ENCODE measurements at regions of chrX and their contacts with region 1.

Region 1: GRCh38 chrX:129931411-129932015 is 25.5 kb downstream of the UTP14A start:
- DNase-seq: peak; percentile 92 to 96
- H3K4me3 ChIP-seq: peak overlapping the region; percentile 66 to 70
- H3K27ac ChIP-seq: peak overlapping the region; percentile 88 to 93
- H3K4me1 ChIP-seq: no peaks in the 10 kb centered on the region
- H3K27me3 ChIP-seq: no peaks in the 10 kb centered on the region
- CTCF ChIP-seq: no peak

Region 2: DNA sequence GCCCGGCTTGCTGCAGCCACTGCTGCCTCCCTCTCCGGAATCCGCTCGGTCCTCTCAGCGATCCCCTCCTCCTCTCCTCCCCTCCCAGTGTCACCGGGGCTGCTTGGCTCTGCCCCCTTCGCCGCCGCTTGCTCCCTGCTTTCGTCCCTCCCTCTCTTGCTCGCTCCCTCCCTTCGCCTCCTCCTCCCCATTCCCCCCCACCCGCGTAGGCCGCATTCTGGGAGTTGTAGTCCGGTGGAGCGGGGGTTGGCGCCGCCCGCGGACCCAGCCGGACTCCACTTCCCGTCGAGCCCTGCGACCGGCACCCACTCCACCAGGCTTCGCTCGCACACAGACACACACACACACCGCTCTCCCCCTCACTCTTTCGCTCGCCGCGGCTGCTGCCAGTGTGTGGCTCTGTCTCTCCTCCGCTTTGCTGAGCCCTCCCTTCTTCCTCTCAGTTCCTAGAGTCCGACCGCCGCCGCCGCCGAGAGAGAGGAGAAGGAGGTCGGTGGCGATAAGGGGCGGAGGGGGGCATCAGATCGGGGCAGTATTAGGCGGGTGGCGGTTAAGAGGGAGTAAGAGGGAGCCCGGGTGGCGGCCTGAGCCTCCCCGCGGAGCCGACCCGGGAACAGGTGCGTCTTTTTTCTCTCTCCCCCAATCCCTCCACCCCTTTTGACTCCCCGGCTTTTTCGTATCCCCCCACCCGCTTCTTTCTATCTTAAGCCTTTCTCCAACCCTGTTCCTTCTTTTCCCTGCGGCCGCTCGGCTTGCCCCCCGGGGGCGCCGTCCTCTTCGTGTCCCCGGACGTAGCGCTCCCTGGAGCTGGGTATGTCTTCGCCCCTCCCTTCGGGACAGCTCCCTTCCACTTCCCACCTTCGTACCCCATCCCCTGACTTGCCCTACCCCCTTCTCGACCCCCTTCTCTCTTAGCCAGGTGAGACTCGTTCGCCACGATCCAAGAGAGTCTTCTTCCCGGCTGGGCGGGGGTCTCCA is 51.0 kb after region 1 on chrX and contains the start of gene BCORL1:
- intact Hi-C with region 1: loop called (anchors 2 kb)
- DNase-seq: peak; percentile 91 to 96
- H3K4me3 ChIP-seq: no peak within 1 kb of the TSS
- H3K27ac ChIP-seq: peak within 1 kb of the TSS; percentile 82 to 90
- H3K4me1 ChIP-seq: peaks cover 0 to 7% (median 3%) of the 10 kb centered on the region in 4 donors
- H3K27me3 ChIP-seq: no peaks in the 10 kb centered on the region
- CTCF ChIP-seq: no peak

Region 3: DNA sequence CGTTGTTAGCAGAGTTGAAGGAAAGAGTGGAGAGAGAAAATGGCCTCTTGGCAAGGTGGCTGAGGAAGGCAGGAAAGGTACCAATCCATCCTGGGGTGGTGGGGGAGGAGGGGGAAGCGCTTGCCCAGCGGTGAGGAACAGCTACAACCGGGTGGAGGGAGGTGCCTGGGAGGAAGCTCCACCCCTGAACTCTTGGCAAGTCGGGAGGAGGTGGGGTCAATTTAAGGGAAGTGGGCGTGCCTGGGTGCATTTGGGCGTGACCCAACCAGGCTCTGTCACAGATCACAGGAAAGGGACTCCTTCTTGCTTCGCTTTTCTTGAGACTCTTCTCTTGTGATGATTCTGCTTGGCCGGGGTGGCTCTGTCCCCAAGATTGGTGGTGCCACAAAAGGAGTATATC is 92.6 kb after region 1 on chrX:
- intact Hi-C with region 1: loop called (anchors 10 kb)
- DNase-seq: peak; percentile 81 to 86
- H3K4me3 ChIP-seq: no peak overlapping the region
- H3K27ac ChIP-seq: no peak overlapping the region
- H3K4me1 ChIP-seq: peaks cover 0 to 11% (median 0%) of the 10 kb centered on the region in 4 donors
- H3K27me3 ChIP-seq: no peaks in the 10 kb centered on the region
- CTCF ChIP-seq: no peak

Region 4: DNA sequence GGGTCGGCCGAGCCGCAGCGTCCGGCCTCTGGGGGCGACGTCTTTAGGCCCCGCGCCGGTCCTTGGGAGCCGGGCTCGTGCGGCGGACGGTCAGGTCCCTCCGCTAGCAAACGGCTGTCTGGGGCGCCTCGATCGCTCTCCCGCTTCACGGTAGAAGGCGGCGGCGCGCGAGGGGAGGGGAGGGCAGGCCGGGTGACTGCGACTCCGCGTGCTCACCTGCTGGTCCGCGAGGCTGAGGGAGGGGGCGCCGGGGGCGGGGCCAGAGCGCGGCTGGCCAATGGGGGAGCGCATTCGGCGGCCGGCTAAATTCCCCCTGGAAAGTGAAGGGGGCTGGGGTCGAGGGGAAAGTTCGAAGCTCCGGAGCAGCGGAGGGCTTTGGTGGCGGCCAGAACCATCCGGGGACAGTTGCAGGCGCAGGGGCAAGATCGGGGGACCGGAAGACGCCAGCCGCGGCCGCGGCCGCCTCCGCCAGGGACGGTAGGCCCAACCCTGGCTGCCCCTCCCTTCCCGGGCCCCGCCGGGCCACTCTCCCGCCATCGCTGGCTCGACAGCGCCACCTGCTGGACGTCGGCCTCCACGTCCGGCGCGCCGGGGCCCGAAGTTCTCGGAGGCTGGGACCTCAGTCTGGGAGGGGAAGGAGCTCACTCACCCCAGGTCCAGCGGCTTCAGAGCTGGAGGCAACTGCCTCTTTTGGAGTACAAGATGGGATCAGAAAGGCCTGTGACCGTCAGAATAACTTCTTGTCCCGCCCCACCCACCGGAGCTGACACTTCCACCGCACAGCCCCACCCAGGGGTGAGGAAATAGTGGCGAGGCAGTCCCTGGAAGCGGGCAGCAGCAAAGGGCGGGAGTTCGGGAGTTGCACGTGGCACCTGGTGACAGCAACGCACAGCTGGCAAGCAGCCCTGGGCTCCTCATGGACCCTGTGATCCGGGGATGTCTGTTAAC is 128.9 kb after region 1 on chrX:
- intact Hi-C with region 1: loop called (anchors 1 kb)
- DNase-seq: peak; percentile 64 to 85
- H3K4me3 ChIP-seq: peak overlapping the region; percentile 57 to 61
- H3K27ac ChIP-seq: peak overlapping the region; percentile 68 to 73
- H3K4me1 ChIP-seq: peaks cover 0 to 13% (median 5%) of the 10 kb centered on the region in 4 donors
- H3K27me3 ChIP-seq: no peaks in the 10 kb centered on the region
- CTCF ChIP-seq: peak; percentile 73 to 85

Measured in tibial artery (tissue), 4 donors.